Gastrocnemius medialis (tissue), 4 donors: ENCODE measurements at regions of chr17 and their contacts with region 1.

Region 1: DNA sequence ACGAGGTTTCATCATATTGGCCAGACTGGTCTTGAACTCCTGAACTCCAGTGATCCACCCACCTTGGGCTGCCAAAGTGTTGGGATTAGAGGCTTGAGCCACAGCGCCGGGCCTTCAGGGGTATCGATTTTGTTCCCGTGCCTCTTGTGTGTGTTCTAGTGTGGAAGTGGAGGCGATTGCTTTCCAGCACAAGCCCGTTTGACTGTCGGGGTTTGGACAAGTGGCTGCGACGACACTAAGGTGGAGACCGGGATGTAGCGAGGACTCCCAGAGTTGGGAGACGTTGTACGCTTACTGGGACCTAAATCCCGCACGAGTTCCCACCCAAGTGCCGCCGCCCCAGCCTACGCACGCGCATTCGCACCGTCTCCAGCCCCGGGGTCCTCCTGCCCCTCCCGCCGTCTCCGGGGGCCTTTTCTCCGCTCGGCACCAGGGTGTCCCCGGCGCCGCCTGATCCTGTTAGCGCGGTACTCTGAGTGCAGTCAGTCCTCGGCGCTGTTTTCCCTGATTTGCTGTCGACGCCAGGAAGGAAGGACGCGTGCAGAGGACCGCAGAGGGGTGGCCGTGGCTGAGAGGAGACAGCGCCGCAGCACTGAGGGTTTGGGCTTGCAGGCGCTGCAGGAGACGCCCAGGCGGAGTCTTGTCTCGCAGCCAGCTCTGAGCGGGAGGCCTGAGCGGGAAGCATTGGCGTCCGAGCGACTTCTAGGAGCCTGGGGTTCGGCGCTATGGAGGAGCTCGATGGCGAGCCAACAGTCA is at the start of gene NUP85:
- DNase-seq: peak; percentile 88 to 91
- ATAC-seq: peak; percentile 93 to 95
- H3K4me3 ChIP-seq: peak within 1 kb of the TSS; percentile 81 to 96 (median 88)
- H3K27ac ChIP-seq: peak within 1 kb of the TSS; percentile 87 to 98 (median 95)
- H3K4me1 ChIP-seq: peaks cover 12 to 16% of the 10 kb centered on the region in 2 donors
- H3K27me3 ChIP-seq: no peaks in the 10 kb centered on the region
- CTCF ChIP-seq: peak in 4 of 5 experiments; percentile 2 to 33 (median 16)
- POLR2A ChIP-seq: peak; percentile 69 to 72
- total RNA-seq, gene NUP85: 9.4 to 27.7 (median 13.6) TPM

Region 2: GRCh38 chr17:75182569-75183450 is 22.4 kb before region 1 on chr17 and contains the start of gene SUMO2:
- in situ Hi-C with region 1: no loop called
- intact Hi-C with region 1: loop called (anchors 1 kb)
- DNase-seq: peak; percentile 93 to 96
- ATAC-seq: peak; percentile 93 to 96
- H3K4me3 ChIP-seq: peak within 1 kb of the TSS; percentile 88 to 99 (median 93)
- H3K27ac ChIP-seq: peak within 1 kb of the TSS; percentile 90 to 100 (median 96)
- H3K4me1 ChIP-seq: peaks cover 27 to 28% of the 10 kb centered on the region in 2 donors
- H3K27me3 ChIP-seq: no peaks in the 10 kb centered on the region
- CTCF ChIP-seq: peak in 4 of 5 experiments; percentile 38 to 65 (median 48)
- POLR2A ChIP-seq: peak; percentile 72 to 79
- total RNA-seq, gene SUMO2: 36.7 to 45.1 (median 43.3) TPM